Vagina (tissue), 2 donors: ENCODE measurements at regions of chr5 and their contacts with region 1.

Region 1: GRCh38 chr5:90184764-90185163 is 224.8 kb downstream of the CETN3 start:
- DNase-seq: no peak
- H3K4me3 ChIP-seq: no peak overlapping the region
- H3K27ac ChIP-seq: no peak overlapping the region
- H3K4me1 ChIP-seq: peaks cover 6% of the 10 kb centered on the region
- H3K27me3 ChIP-seq: no peaks in the 10 kb centered on the region
- CTCF ChIP-seq: no peak
- POLR2A ChIP-seq: no peak

Region 2: GRCh38 chr5:88729084-88729828 is 1455.5 kb before region 1 on chr5:
- intact Hi-C with region 1: loop called (anchors 10 kb)
- DNase-seq: no peak
- H3K4me3 ChIP-seq: no peak overlapping the region
- H3K27ac ChIP-seq: no peak overlapping the region
- H3K4me1 ChIP-seq: no peaks in the 10 kb centered on the region
- H3K27me3 ChIP-seq: no peaks in the 10 kb centered on the region
- CTCF ChIP-seq: peak; percentile 66 to 74 (median 67)
- POLR2A ChIP-seq: no peak